ENCODE measurements at regions of chr17 and their contacts with region 1.

Region 1: DNA sequence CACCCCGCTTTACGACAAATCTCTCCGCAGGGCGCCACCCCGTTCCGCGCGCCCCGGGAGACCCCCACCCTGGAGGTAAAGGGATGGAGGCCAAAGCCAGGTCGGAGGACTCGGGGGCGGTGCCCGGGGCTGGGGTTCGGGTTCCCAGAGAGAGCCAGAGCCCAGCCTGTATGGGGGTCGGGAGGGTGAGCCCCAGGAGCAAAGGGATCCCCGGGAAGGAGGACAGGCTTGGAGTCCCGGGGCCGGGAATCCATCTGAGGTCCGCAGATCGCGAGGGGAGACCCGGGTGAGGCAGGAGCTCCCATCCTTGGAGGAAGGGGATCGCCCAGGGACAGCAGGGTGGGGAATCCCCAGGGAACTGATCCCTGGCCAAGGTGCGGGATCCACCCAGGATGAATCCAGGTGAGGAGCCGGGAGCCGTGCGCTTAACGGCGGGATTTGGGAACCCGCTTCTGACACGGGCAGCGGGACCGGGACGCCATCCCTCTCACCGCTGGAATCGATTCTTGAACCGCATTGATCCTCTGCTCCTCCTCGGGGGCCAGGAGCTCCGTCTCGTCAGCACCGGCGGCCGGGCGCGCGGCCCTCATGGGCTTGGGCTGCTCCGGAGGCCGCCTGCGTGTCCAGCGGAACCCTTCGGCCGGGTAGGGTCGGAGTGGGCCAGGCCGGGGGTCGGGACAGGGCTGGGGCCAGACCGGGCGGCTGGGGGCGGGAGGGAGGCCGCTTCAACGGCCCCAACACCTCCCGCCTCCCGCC is at the start of gene MMD:
- DNase-seq: peak; percentile 38
- H3K4me3 Mint-ChIP-seq: peak within 1 kb of the TSS; percentile 91
- H3K27ac Mint-ChIP-seq: peak within 1 kb of the TSS; percentile 97
- H3K4me1 Mint-ChIP-seq: peaks cover 52% of the 10 kb centered on the region
- H3K27me3 Mint-ChIP-seq: peaks cover 28% of the 10 kb centered on the region
- total RNA-seq, gene MMD: 29.6 and 30.1 TPM in 2 replicates

Region 2: GRCh38 chr17:55314784-55315491 is 106.4 kb before region 1 on chr17:
- intact Hi-C with region 1: loop called (anchors 10 kb)
- DNase-seq: peak; percentile 25
- H3K4me3 Mint-ChIP-seq: peak overlapping the region; percentile 51
- H3K27ac Mint-ChIP-seq: peak overlapping the region; percentile 84
- H3K4me1 Mint-ChIP-seq: peaks cover 30% of the 10 kb centered on the region
- H3K27me3 Mint-ChIP-seq: no peaks in the 10 kb centered on the region

Region 3: GRCh38 chr17:55348749-55349354 is 72.5 kb before region 1 on chr17:
- intact Hi-C with region 1: loop called (anchors 2 kb)
- DNase-seq: peak; percentile 28
- H3K4me3 Mint-ChIP-seq: no peak overlapping the region
- H3K27ac Mint-ChIP-seq: no peak overlapping the region
- H3K4me1 Mint-ChIP-seq: peaks cover 58% of the 10 kb centered on the region
- H3K27me3 Mint-ChIP-seq: peaks cover 2% of the 10 kb centered on the region

Region 4: DNA sequence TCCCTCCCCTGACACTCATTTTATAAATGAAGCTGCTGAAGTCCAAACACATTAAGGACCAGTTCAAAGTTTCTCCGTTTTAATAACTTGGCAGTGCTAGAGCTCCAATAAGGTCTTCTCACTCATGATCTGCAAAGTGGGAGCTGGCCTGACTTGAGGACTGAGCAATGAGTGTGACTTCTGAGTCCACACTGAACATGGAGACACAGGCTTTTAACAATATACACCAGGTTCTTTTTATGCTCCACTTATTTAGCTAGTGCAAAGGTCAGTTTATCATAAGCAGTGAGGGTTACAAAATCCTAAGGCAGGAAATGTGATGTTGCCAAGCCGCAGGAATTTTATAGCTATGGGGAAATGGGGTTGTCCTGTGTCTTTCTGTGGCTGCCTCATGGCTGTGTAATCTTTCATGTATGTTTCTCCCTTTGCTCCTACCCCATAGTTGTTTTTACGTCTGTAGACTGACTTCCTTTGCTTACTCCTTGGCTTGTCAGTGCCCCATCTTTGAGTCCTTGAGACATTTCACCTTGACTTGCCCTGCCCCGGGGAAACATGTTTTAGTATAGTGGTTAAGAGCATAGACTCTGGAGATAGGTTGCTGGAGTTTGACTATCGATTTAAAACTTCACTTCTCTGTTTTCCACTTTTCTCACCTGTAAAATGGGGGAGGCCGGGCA is 12.4 kb after region 1 on chr17:
- intact Hi-C with region 1: loop called (anchors 2 kb)
- DNase-seq: no peak
- H3K4me3 Mint-ChIP-seq: no peak overlapping the region
- H3K27ac Mint-ChIP-seq: no peak overlapping the region
- H3K4me1 Mint-ChIP-seq: peaks cover 44% of the 10 kb centered on the region
- H3K27me3 Mint-ChIP-seq: peaks cover 16% of the 10 kb centered on the region

Region 5: DNA sequence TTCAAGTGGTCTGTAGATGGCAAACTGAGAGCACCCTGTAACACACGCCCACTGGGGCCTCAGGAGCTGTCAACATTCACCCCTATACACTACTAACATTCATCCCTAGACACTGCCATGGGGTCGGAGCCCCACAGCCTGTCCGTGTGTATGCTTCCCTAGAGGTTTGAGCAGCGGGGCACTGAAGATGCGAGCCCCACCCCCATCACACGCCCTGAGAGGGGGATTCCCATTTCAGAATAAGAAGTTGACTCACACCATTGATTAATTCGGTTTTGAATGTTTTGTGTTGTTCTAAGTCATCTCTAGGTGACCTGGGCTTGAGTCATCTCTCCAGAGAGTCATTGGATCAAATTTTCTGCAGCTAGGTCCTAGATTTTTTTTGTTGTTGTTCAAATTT is 37.6 kb after region 1 on chr17:
- intact Hi-C with region 1: loop called (anchors 2 kb)
- DNase-seq: no peak
- H3K4me3 Mint-ChIP-seq: no peak overlapping the region
- H3K27ac Mint-ChIP-seq: no peak overlapping the region
- H3K4me1 Mint-ChIP-seq: peaks cover 16% of the 10 kb centered on the region
- H3K27me3 Mint-ChIP-seq: peaks cover 8% of the 10 kb centered on the region

Region 6: DNA sequence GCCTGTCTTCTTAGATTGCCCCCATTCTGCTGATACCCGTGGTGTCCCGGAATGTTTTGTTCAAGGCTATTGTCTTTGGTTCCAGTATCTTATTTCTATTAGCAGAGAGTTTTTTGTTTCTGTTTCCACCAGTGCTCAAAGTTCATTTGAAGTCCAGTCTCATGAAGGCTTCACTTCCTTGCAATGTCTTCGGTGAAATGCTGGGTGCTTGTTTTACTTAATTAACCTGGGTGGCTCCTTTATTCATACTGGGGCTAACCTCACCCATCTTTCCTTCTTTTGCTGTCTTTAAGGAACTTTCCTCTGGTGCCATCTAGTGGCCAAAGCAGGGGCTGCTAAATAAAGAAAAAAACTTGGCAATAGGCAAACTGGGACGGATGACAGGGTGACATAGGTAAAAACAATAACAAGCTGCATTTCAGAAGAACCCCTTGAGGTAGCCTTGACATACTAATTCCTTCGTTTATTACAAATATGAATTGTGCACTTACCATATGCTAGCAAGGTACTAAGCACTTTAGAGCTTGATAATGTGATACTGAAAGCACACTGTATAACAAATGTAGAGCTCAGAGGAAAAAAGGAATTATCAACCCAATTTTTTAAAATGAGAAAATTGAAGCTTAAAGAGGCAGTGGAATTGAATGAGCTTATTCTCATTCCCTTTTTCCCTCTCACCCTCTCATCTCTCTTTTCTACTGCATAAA is 92.7 kb after region 1 on chr17:
- intact Hi-C with region 1: loop called (anchors 5 kb)
- DNase-seq: peak; percentile 50
- H3K4me3 Mint-ChIP-seq: no peak overlapping the region
- H3K27ac Mint-ChIP-seq: no peak overlapping the region
- H3K4me1 Mint-ChIP-seq: peaks cover 14% of the 10 kb centered on the region
- H3K27me3 Mint-ChIP-seq: peaks cover 25% of the 10 kb centered on the region

Region 7: DNA sequence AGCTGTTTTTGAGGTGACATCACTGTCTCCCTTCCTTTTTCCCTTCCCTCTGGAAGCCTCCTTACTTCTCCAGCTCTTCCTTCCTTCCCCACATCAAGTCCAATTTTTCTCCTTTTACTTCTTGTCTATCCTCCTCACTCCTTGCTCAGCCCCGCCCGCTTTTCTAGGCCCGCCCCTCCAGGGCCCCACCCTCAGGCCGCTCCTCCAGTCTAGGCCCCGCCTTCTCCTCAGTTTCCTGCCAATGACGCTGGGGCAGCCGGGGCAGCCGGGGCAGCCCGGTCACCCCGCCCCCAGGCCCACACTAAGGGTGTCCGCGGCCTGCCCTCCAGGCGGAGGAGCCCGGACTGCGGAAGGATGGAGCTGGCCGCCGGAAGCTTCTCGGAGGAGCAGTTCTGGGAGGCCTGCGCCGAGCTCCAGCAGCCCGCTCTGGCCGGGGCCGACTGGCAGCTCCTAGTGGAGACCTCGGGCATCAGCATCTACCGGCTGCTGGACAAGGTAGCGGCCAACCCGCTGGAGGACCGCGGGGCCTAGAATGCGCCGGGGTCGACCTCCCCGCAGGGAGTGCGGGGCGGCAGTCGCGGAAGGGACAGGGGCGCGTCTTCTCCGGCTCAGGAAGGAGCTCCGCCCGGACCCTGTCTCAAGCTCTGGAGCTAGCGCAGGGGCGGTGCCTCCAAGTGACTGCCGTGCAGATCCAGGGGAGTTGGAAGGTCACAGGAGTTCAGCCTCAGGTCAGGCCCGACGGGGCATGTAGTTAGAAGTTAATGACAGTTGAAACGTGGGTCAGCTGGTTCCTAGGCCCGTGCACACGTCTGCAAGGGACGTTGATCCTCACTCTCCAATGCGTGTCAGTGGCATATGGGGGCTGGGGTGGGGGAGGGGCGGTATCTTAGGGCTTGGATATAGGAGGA is 329.6 kb after region 1 on chr17 and contains the start of gene PCTP:
- intact Hi-C with region 1: loop called (anchors 5 kb)
- DNase-seq: peak; percentile 85
- H3K4me3 Mint-ChIP-seq: peak within 1 kb of the TSS; percentile 81
- H3K27ac Mint-ChIP-seq: peak within 1 kb of the TSS; percentile 28
- H3K4me1 Mint-ChIP-seq: peaks cover 14% of the 10 kb centered on the region
- H3K27me3 Mint-ChIP-seq: peaks cover 30% of the 10 kb centered on the region
- total RNA-seq, gene PCTP: 8.8 and 9.4 TPM in 2 replicates

Region 8: GRCh38 chr17:55845385-55845784 is 424.0 kb after region 1 on chr17:
- intact Hi-C with region 1: no loop called
- DNase-seq: no peak
- H3K4me3 Mint-ChIP-seq: no peak overlapping the region
- H3K27ac Mint-ChIP-seq: no peak overlapping the region
- H3K4me1 Mint-ChIP-seq: no peaks in the 10 kb centered on the region
- H3K27me3 Mint-ChIP-seq: peaks cover 5% of the 10 kb centered on the region